ENCODE measurements at regions of chr2 and their contacts with region 1.

Region 1: GRCh38 chr2:27086090-27086723 is 365 bp upstream of the KHK start:
- DNase-seq: peak; percentile 95 to 99 (median 98)
- ATAC-seq: peak; percentile 88 to 91
- H3K4me3 ChIP-seq: peak overlapping the region; percentile 74
- H3K27ac ChIP-seq: peak overlapping the region; percentile 67
- H3K4me1 ChIP-seq: no peaks in the 10 kb centered on the region
- H3K27me3 ChIP-seq: no peaks in the 10 kb centered on the region

Region 2: DNA sequence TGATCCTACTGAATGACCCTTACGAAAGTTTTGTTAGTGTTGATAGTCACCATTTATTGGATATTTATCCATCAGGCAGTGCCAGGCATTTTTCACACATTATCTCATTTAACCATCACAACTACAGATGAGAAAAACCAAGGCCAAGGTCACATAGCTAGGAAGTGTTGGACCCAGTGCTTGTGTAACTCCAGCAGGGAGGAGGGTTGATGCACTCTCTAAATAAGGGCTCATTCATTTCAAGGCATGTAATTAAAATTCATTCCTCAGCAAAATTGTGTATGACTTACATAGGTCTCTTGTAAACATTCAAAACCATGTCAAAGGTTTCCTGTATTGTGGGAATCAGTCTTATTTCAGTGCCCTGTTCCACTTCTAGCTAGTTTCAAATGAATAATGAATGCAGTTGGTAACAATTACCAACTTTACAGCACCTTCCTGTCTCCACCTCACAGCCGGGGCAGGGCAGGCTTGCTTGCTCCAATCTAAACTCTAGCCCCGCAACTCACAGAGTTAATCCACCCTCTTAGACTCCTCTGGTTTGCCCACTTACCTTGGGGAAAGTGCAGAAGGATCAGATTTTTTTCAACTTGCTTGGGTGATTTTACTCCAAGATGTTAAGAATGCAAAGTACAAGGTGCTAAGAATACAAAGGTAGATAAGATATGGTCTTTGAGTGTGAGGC is 121.6 kb before region 1 on chr2:
- intact Hi-C with region 1: loop called (anchors 5 to 10 kb)
- DNase-seq: no peak
- ATAC-seq: no peak
- H3K4me3 ChIP-seq: no peak overlapping the region
- H3K27ac ChIP-seq: no peak overlapping the region
- H3K4me1 ChIP-seq: no peaks in the 10 kb centered on the region
- H3K27me3 ChIP-seq: no peaks in the 10 kb centered on the region

Region 3: DNA sequence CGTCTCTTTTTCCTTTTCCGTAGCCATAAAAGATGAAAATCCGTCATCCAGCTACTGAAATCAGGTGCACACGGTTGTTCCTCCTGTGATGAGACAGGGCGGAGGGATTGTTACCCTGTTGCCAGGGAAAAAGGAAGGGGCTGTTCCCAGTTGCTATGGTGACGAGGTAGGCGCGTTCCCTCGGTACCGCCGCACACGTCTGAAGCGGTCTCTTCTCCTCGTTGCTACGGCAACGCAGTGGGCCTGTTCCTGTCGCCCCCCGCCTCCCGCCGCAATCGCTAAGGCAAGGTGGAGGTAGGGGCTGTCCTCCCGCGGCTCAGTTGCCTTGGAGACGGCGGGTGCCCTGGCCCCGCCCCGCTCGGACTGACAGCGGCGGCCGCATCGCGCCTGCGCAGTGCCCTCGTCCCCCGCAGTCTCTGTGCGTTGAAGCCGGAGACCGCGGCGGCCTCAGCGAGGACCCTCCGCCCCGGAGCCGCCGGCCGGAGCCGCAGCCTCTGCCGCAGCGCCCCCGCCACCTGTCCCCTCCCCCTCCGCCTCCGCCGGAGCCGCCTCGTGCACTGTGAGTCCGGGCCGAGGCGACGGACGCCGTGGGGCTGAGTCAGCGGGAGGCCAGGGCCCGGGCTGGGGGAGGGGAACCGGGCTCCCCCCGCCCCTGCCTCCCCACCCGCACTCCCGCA is 115.8 kb before region 1 on chr2 and contains the start of gene MAPRE3:
- intact Hi-C with region 1: loop called in 2 of 4 experiments (anchors 10 kb)
- DNase-seq: peak; percentile 83 to 95 (median 93)
- ATAC-seq: peak; percentile 95 to 96
- H3K4me3 ChIP-seq: peak within 1 kb of the TSS; percentile 53
- H3K27ac ChIP-seq: peak within 1 kb of the TSS; percentile 30
- H3K4me1 ChIP-seq: peaks cover 4% of the 10 kb centered on the region
- H3K27me3 ChIP-seq: no peaks in the 10 kb centered on the region
- total RNA-seq, gene MAPRE3: 43.6 to 58.8 (median 49.9) TPM

Region 4: GRCh38 chr2:27032495-27033252 is 53.5 kb before region 1 on chr2 and contains the start of gene TMEM214:
- intact Hi-C with region 1: loop called in 3 of 4 experiments (anchors 5 to 10 kb)
- DNase-seq: peak; percentile 93 to 97 (median 96)
- ATAC-seq: peak; percentile 98
- H3K4me3 ChIP-seq: peak within 1 kb of the TSS; percentile 79
- H3K27ac ChIP-seq: peak within 1 kb of the TSS; percentile 55
- H3K4me1 ChIP-seq: no peaks in the 10 kb centered on the region
- H3K27me3 ChIP-seq: no peaks in the 10 kb centered on the region
- total RNA-seq, gene TMEM214: 40.8 to 56.7 (median 47.7) TPM

Region 5: DNA sequence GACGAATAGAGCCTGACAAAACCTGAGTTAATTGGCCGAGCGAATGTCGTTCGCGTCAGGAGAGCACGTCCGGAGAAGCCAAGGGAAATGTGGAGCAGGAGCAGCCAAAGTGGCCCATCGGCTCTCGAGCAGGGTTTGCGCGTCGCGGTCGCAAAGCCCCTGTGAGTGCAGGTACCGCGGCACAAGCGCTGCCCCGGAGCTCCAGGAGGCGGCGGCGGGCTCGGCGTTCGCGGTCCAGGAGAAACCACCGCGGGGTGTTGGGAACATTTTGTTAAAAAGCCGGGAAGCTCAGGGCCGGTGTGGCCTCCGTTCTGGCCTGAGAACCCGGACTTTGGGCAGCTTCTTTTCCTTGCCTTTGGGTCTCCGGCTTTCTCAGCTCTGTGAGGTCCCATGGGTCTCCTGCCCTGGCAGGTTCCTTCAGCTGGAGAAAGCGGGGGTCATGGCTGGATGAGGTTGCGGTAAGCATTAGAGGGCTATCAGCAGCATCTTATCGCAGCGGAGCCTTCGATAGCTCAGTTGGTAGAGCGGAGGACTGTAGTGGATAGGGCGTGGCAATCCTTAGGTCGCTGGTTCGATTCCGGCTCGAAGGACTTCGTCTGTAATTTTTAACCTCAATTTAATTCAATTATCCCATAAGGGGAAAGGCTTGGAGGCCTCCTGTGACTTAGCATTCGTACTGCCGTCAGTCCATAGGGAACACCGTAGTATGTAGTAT is 35.8 kb before region 1 on chr2:
- intact Hi-C with region 1: loop called in 1 of 4 experiments (anchors 5 kb)
- DNase-seq: peak; percentile 80 to 94 (median 93)
- ATAC-seq: peak; percentile 87 to 90
- H3K4me3 ChIP-seq: peak overlapping the region; percentile 80
- H3K27ac ChIP-seq: peak overlapping the region; percentile 87
- H3K4me1 ChIP-seq: no peaks in the 10 kb centered on the region
- H3K27me3 ChIP-seq: no peaks in the 10 kb centered on the region

Region 6: DNA sequence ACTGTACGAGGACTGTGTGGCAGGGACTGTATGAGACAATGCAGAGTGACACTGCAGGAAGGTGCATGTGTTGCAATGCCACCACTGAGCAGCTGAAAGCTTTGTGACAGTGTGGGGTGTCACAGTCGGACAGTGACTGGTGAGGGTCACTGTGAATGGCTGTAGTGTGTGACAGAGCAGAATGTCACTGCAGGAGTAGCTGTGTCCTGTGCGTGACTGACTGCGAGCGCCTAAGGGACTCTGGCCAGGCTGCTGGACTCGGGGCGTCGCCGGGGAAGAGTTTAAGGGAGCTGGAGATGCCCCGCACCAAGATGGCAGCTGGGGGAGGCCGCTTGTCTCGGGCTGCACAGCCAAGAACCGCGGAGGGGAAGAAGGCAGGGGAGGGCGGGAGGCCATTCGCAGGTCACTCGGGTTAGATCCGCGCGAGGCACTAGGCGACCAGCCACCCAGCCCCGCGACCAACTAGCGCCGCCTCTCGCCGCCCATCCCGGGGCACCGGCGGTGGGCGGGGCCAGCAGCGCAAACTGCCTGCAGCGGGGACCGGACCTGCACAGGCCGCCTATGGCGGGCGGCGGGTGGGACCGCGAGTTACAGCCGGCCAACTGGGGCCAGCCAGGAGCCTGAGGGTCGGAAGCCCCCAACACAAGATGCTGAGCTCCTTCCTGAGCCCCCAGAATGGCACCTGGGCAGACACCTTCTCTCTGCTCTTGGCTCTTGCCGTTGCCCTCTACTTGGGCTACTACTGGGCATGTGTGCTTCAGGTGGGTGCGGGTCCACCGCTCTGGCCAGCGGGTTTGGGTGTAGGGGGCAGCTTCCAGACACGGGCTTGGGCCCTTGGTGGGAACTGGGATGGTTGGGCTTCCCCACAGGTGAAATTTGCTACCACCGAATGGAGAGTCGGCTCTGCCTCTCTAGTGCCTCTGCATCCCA is 37.4 kb after region 1 on chr2 and contains the start of gene ABHD1:
- intact Hi-C with region 1: no loop called
- DNase-seq: peak; percentile 71 to 91 (median 90)
- ATAC-seq: peak; percentile 87 to 91
- H3K4me3 ChIP-seq: peak within 1 kb of the TSS; percentile 57
- H3K27ac ChIP-seq: peak within 1 kb of the TSS; percentile 67
- H3K4me1 ChIP-seq: peaks cover 3% of the 10 kb centered on the region
- H3K27me3 ChIP-seq: no peaks in the 10 kb centered on the region
- total RNA-seq, gene ABHD1: 1.6 to 4.7 (median 2.6) TPM